Activated CD4-positive, alpha-beta T cell treated with anti-CD3 and anti-CD28 coated beads, Interleukin-2, amount 10 ng/mL, durations not matched to agents 24 days and 14 days (primary cell): ENCODE measurements at regions of chr12 and their contacts with region 1.

Region 1: GRCh38 chr12:124713436-124714082 is 146.1 kb upstream of the NCOR2 start:
- DNase-seq: peak; percentile 90
- H3K4me3 Mint-ChIP-seq: peak overlapping the region; percentile 58
- H3K27ac Mint-ChIP-seq: peak overlapping the region; percentile 78
- H3K4me1 Mint-ChIP-seq: peaks cover 18% of the 10 kb centered on the region
- H3K27me3 Mint-ChIP-seq: peaks cover 20% of the 10 kb centered on the region

Region 2: DNA sequence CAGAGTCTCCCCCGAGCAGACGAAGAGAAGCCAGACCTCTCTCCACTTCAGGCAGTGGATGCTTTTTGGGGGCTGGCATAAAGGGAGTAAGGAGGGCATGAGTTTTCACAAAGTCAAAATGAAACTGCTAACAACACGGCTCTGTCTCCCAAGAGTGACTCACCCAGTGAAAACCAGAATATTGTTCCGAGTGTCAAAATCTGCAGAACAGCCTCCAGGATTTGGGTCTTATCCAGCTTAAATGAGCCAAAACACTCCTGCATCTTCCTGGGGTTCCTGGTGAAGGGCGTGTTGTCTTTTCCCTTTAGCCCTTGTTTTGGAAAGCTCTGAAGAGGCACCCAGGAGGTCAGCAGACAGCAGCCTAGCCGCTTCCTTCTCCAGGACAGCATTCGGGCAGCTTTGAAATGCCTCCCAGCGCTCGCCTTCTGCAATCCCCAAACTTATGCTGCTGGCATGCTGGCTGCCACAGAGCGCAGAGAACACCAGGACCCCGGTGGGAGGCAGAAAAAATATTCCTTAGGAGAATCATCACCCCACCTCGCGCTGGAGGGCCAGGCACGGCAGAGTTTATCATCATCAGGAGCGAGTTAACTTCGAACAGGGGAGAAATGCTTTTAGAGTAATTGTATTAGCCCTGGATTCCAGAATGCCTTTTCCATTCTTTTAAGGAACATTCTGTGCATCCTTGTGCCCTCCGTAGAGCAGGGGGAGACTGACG is 28.4 kb before region 1 on chr12:
- intact Hi-C with region 1: loop called (anchors 2 kb)
- DNase-seq: no peak
- H3K4me3 Mint-ChIP-seq: no peak overlapping the region
- H3K27ac Mint-ChIP-seq: no peak overlapping the region
- H3K4me1 Mint-ChIP-seq: peaks cover 25% of the 10 kb centered on the region
- H3K27me3 Mint-ChIP-seq: peaks cover 7% of the 10 kb centered on the region

Region 3: DNA sequence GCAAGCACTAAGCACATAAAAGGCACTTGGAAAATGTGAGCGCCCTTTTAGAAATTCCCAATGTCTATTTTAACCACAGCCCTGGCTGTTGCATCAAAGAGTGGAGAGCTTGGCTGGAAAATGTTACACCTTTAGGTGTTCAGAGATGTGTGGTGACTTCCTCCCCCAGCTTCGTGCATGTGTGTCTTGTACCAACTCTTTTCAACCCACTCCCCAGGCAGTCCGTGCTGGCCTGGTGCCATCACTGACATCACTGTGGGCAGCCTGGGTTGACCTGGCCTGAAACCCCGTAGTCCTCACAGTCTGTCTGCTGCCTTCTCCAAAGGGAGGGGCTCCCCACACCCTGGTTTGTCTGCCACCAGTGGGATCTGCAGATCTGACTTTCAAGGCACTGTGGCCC is 48.3 kb after region 1 on chr12:
- intact Hi-C with region 1: loop called (anchors 1 kb)
- DNase-seq: no peak
- H3K4me3 Mint-ChIP-seq: peak overlapping the region; percentile 28
- H3K27ac Mint-ChIP-seq: peak overlapping the region; percentile 34
- H3K4me1 Mint-ChIP-seq: peaks cover 13% of the 10 kb centered on the region
- H3K27me3 Mint-ChIP-seq: peaks cover 9% of the 10 kb centered on the region